A549 (cell line): ENCODE measurements at regions of chr1 and their contacts with region 1.

Region 1: GRCh38 chr1:169546087-169546995 is 39.9 kb downstream of the F5 start:
- DNase-seq: peak in 1 of 2 experiments; percentile 74
- ATAC-seq: peak; percentile 78 to 91
- H3K4me3 ChIP-seq: no peak overlapping the region
- H3K27ac ChIP-seq: no peak overlapping the region
- H3K4me1 ChIP-seq: no peaks in the 10 kb centered on the region
- CTCF ChIP-seq: peak; percentile 82
- EP300 ChIP-seq: no peak
- POLR2A ChIP-seq: no peak
- RAD21 ChIP-seq: peak; percentile 83 to 86

Region 2: GRCh38 chr1:169485544-169486278 is 60.6 kb before region 1 on chr1 and contains the start of gene SLC19A2:
- CTCF ChIA-PET with region 1: interaction called, 5 read pairs
- POLR2A ChIA-PET with region 1: interaction called, 18 read pairs
- DNase-seq: peak; percentile 99
- ATAC-seq: peak; percentile 94 to 100
- H3K4me3 ChIP-seq: peak within 1 kb of the TSS; percentile 63
- H3K27ac ChIP-seq: peak within 1 kb of the TSS; percentile 77 to 96
- H3K4me1 ChIP-seq: peaks cover 18% of the 10 kb centered on the region; the same call in 2 of the 3 replicates
- CTCF ChIP-seq: no peak
- EP300 ChIP-seq: no peak
- POLR2A ChIP-seq: peak; percentile 71
- RAD21 ChIP-seq: peak; percentile 21 to 37; a peak in 2 of 5 replicates
- polyA plus RNA-seq, gene SLC19A2: 11.7 and 13.3 TPM in 2 replicates

Region 3: GRCh38 chr1:169557131-169557530 is 10.8 kb after region 1 on chr1:
- CTCF ChIA-PET with region 1: interaction called, 15 read pairs
- POLR2A ChIA-PET with region 1: no interaction called
- DNase-seq: no peak
- ATAC-seq: no peak
- H3K4me3 ChIP-seq: no peak overlapping the region
- H3K27ac ChIP-seq: no peak overlapping the region
- H3K4me1 ChIP-seq: no peaks in the 10 kb centered on the region
- CTCF ChIP-seq: no peak
- EP300 ChIP-seq: no peak
- POLR2A ChIP-seq: no peak
- RAD21 ChIP-seq: no peak

Region 4: DNA sequence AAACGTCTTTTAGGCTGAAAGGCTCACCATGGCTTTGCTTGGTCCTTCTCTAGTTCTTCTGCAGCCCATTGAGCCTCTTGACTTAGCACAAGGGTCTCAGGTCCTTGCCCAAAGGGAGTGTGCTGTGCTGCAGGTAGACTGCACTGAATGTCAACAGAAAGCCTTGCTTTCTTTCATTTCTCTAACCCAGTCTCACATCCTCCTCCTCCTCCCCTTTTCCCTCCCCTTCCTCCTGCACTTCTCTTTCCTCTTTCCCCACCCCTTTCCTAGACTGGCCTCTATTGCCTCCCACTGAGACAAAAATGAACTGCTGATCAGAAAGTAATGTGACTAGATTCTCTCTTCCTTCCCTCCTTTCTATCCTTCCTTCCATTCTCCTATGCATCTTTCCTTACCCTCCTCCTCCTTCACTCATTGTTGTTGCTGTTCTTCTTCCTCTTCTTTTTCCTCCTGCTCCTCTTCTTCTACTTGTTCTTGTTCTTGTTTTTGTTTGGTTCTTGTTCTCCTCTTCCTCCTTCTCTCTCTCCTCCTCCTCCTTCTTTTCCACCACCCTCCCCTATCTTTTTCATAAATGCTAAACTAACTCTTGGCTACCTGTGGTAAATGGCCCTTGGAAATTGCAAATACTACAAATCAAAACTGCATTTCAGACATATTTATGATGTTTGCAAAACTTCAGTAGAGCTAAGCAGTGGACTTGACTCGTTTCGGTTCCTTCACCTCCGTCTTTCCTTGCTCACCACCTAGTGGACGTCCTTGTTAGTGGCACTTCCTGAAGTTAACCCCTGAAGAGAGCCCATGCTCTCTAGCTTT is 165.3 kb after region 1 on chr1 and contains the start of gene SELL:
- CTCF ChIA-PET with region 1: interaction called, 25 read pairs
- POLR2A ChIA-PET with region 1: no interaction called
- DNase-seq: peak; percentile 48 to 81
- ATAC-seq: peak; percentile 99 to 100
- H3K4me3 ChIP-seq: peak within 1 kb of the TSS; percentile 13
- H3K27ac ChIP-seq: 0 out of 6 replicates have a peak within 1 kb of the TSS, but pooled peaks of 1 of the 2 experiments have one; percentile 11
- H3K4me1 ChIP-seq: no peaks in the 10 kb centered on the region
- CTCF ChIP-seq: peak; percentile 73
- EP300 ChIP-seq: no peak
- POLR2A ChIP-seq: no peak
- RAD21 ChIP-seq: peak; percentile 74 to 84
- polyA plus RNA-seq, gene SELL: 0.22 and 0.39 TPM in 2 replicates